HEK293 (cell line): ENCODE measurements at regions of chr17 and their contacts with region 1.

Region 1: GRCh38 chr17:1331708-1332107 is 52.2 kb downstream of the TRARG1 start:
- H3K4me3 ChIP-seq: no peak overlapping the region
- H3K27ac ChIP-seq: no peak overlapping the region
- H3K4me1 ChIP-seq: no peaks in the 10 kb centered on the region
- CTCF ChIP-seq: no peak

Region 2: DNA sequence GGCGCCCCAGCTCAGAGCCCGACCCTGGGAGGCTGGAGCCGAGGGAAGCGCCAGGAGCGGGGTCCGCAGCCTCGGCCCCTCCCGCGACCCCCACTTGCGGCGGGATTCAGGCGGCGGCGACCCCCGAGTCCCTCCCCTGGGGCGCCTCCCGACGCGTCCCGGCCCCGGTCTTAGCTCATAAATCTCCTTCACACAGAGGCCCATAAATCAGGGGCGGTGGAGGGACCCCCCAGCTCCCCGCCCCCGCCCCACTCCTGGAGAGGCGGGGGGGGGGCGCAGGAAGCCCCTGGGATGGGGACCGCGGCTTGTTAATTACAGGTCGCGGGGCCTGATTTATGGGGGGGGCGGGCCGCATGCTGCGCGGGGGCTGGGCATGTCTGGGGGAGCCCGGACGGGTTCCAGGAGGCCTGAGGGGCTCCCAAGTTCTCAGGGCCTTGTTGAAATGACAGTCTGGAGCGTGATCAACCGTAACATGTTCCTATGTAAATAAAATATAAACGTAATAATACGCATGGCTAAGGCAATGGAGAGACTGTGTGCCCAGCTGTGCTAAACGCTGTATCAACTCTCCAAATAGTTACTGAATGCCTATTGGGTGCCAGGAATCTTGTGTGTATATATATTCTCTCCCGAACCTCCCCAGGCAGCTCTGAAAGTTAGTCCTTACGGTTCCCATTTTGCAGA is 71.5 kb before region 1 on chr17:
- CTCF ChIA-PET with region 1: interaction called, 24 read pairs
- POLR2A ChIA-PET with region 1: interaction called, 4 read pairs
- H3K4me3 ChIP-seq: peak overlapping the region; percentile 50
- H3K27ac ChIP-seq: peak overlapping the region; percentile 73; the same call in 1 of the 2 replicates
- H3K4me1 ChIP-seq: peaks cover 2% of the 10 kb centered on the region; the same call in 1 of the 2 replicates
- CTCF ChIP-seq: no peak

Region 3: GRCh38 chr17:1272701-1273100 is 59.0 kb before region 1 on chr17:
- CTCF ChIA-PET with region 1: interaction called, 40 read pairs
- POLR2A ChIA-PET with region 1: interaction called, 3 read pairs
- H3K4me3 ChIP-seq: no peak overlapping the region
- H3K27ac ChIP-seq: no peak overlapping the region
- H3K4me1 ChIP-seq: no peaks in the 10 kb centered on the region
- CTCF ChIP-seq: no peak

Region 4: GRCh38 chr17:1312261-1312870 is 19.3 kb before region 1 on chr17:
- CTCF ChIA-PET with region 1: interaction called, 10 read pairs
- POLR2A ChIA-PET with region 1: no interaction called
- H3K4me3 ChIP-seq: no peak overlapping the region
- H3K27ac ChIP-seq: no peak overlapping the region
- H3K4me1 ChIP-seq: peaks cover 13% of the 10 kb centered on the region
- CTCF ChIP-seq: no peak

Region 5: GRCh38 chr17:1412185-1413110 is 80.7 kb after region 1 on chr17:
- CTCF ChIA-PET with region 1: no interaction called
- POLR2A ChIA-PET with region 1: no interaction called
- H3K4me3 ChIP-seq: no peak overlapping the region
- H3K27ac ChIP-seq: no peak overlapping the region
- H3K4me1 ChIP-seq: peaks cover 4% of the 10 kb centered on the region
- CTCF ChIP-seq: no peak

Region 6: GRCh38 chr17:1474402-1475189 is 142.9 kb after region 1 on chr17:
- CTCF ChIA-PET with region 1: interaction called, 10 read pairs
- POLR2A ChIA-PET with region 1: no interaction called
- H3K4me3 ChIP-seq: no peak overlapping the region
- H3K27ac ChIP-seq: no peak overlapping the region
- H3K4me1 ChIP-seq: no peaks in the 10 kb centered on the region
- CTCF ChIP-seq: no peak